H1 (cell line): ENCODE measurements at regions of chr15 and their contacts with region 1.

Region 1: DNA sequence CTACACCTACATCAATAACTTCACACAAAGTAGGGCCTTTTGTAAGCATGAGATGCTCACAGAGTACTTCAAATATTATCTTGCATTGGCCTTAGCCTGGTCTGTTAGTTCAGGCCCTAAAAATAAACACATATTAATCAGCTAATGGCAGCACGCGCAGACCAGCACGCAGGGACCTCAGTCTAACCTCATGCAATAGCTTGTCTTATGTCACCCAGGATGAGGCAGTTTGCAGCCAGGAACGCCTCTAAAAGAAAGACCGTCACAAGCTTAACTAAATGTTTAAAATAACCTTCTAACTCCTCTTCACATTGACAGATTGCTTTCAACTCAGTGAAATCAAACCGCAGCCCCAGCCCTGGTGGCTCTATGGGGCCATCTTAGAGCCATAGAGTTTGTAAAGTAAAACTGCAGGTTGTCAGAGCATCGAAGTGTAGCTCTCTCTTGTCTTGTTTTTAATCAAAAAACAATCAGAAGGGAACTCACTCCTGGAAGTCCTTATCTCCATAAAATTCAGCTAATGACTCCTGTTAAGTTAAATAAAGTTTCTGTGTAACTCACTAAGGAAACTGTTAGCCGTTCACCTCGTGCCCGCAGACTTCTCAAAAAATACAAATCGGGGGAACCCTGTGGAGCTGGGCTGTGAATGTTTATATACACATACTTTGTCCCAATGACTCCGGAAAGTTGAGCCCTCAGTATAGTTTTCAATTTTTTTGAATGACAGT is 212.6 kb downstream of the CDIN1 start:
- DNase-seq: no peak
- H3K4me3 ChIP-seq: no peak overlapping the region
- H3K27ac ChIP-seq: no peak overlapping the region
- H3K4me1 ChIP-seq: no peaks in the 10 kb centered on the region
- H3K27me3 ChIP-seq: no peaks in the 10 kb centered on the region
- CTCF ChIP-seq: no peak
- EP300 ChIP-seq: no peak
- POLR2A ChIP-seq: no peak
- RAD21 ChIP-seq: no peak

Region 2: GRCh38 chr15:36501063-36501678 is 290.8 kb before region 1 on chr15:
- CTCF ChIA-PET with region 1: interaction called, 10 read pairs
- POLR2A ChIA-PET with region 1: no interaction called
- DNase-seq: no peak
- H3K4me3 ChIP-seq: no peak overlapping the region
- H3K27ac ChIP-seq: no peak overlapping the region
- H3K4me1 ChIP-seq: peaks cover 0 to 2% (median 0%) of the 10 kb centered on the region in 4 experiments; a peak in 1 of 7 replicates
- H3K27me3 ChIP-seq: no peaks in the 10 kb centered on the region
- CTCF ChIP-seq: peak in 2 of 3 experiments; percentile 78 to 83; a peak in 3 of 4 replicates
- EP300 ChIP-seq: 0 out of 3 replicates have a peak, but pooled peaks of 1 of the 2 experiments have one; percentile 27
- POLR2A ChIP-seq: no peak
- RAD21 ChIP-seq: peak; percentile 98 to 99